PC-3 (cell line): ENCODE measurements at regions of chr4 and their contacts with region 1.

Region 1: DNA sequence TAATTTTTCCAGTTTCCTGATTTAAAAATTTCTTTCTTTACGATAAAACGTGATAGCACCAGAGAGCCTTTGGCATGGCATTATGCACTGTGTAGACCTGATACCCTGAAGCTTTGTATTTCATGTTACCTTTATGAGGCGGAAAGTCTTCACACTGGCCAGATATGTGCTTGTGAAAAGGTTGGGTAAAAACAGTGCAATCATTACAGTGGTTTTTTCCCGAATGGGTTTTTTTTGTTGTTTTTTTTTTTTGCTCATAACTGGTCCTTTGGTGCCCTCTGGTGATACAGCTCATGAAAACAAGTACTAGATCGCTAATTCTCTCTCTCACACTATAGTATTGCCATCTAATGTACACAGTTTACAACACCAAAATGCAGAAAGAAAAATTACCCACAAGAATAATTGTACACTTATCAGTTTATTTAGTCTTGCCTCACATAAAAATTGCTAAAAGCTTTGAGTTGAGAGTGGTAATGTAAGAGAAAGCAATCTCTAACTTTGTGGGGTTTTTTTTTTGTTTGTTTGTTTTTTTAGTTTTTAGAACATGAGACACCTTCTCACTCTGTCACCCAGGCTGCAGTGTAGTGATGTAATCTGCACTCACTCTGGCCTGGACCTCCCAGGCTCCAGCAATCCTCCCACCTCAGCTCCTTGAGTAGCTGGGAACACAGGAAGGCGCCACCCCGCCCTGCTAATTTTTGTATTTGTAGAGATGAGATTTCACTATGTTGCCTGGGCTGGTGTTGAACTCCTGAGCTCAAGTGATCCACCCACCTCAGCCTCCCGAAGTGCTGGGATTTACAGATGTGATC is 21.3 kb downstream of the SPCS3 start:
- DNase-seq: peak; percentile 52
- ATAC-seq: peak; percentile 60
- H3K4me3 ChIP-seq: peak overlapping the region; percentile 49; the same call in 1 of the 2 replicates
- H3K27ac ChIP-seq: no peak overlapping the region
- H3K4me1 ChIP-seq: peaks cover 6% of the 10 kb centered on the region; the same call in 1 of the 2 replicates
- H3K27me3 ChIP-seq: no peaks in the 10 kb centered on the region
- CTCF ChIP-seq: peak; percentile 77

Region 2: DNA sequence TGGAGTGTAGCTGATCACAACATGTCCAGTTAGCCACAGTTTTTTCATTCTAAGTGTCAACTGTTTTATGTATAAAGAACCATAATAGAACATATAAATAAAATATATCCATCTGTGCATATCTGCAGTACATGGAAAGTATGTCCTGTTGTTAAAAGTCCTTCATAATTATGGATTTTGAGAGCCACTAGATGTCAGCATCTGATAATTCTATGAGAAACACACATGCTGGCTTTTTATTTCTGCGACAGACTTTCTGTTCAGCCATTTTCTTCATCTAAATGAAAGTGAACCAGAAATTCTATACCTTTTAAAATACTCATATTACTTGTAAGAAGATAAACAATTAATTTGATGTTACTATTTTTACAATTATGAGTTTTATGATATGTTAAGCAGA is 780.5 kb before region 1 on chr4:
- CTCF ChIA-PET with region 1: no interaction called
- POLR2A ChIA-PET with region 1: no interaction called
- intact Hi-C with region 1: loop called (anchors 1 kb)
- DNase-seq: peak; percentile 68
- ATAC-seq: peak; percentile 68
- H3K4me3 ChIP-seq: no peak overlapping the region
- H3K27ac ChIP-seq: no peak overlapping the region
- H3K4me1 ChIP-seq: 0 out of 2 replicates have a peak, but pooled peaks cover 5% of the 10 kb centered on the region
- H3K27me3 ChIP-seq: no peaks in the 10 kb centered on the region
- CTCF ChIP-seq: peak; percentile 67

Region 3: GRCh38 chr4:175947117-175947722 is 393.9 kb before region 1 on chr4:
- CTCF ChIA-PET with region 1: no interaction called
- POLR2A ChIA-PET with region 1: no interaction called
- intact Hi-C with region 1: loop called (anchors 5 kb)
- DNase-seq: peak; percentile 58
- ATAC-seq: no peak
- H3K4me3 ChIP-seq: no peak overlapping the region
- H3K27ac ChIP-seq: no peak overlapping the region
- H3K4me1 ChIP-seq: no peaks in the 10 kb centered on the region; the same call in 1 of the 2 replicates
- H3K27me3 ChIP-seq: no peaks in the 10 kb centered on the region
- CTCF ChIP-seq: peak; percentile 46

Region 4: DNA sequence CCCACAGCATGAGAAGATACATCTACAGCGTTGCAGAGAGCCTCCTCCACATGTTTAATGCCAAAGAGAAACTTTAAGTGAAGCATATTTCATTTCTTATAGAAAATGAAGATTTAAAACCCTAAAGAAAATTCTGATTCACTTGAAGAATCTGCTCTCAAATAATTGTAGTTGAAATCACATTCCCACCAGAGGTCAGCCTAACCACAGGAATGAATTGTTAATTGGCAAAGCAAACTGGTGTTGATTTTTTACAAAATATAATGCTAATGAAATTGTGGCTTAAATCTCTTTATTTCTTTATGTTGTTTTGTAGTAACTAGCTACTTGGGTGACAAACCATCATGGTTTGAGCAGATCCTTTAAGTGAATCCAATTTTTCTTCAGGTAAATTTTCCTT is 306.6 kb before region 1 on chr4:
- CTCF ChIA-PET with region 1: no interaction called
- POLR2A ChIA-PET with region 1: no interaction called
- intact Hi-C with region 1: loop called (anchors 1 kb)
- DNase-seq: peak; percentile 51
- ATAC-seq: no peak
- H3K4me3 ChIP-seq: no peak overlapping the region
- H3K27ac ChIP-seq: no peak overlapping the region
- H3K4me1 ChIP-seq: no peaks in the 10 kb centered on the region
- H3K27me3 ChIP-seq: no peaks in the 10 kb centered on the region
- CTCF ChIP-seq: peak; percentile 58

Region 5: GRCh38 chr4:176150356-176150682 is 190.8 kb before region 1 on chr4:
- CTCF ChIA-PET with region 1: interaction called, 6 read pairs
- POLR2A ChIA-PET with region 1: no interaction called
- intact Hi-C with region 1: loop called (anchors 1 kb)
- DNase-seq: peak; percentile 47
- ATAC-seq: peak; percentile 60
- H3K4me3 ChIP-seq: no peak overlapping the region
- H3K27ac ChIP-seq: no peak overlapping the region; the same call in 1 of the 2 replicates
- H3K4me1 ChIP-seq: peaks cover 7% of the 10 kb centered on the region; the same call in 1 of the 2 replicates
- H3K27me3 ChIP-seq: no peaks in the 10 kb centered on the region
- CTCF ChIP-seq: peak; percentile 63

Region 6: DNA sequence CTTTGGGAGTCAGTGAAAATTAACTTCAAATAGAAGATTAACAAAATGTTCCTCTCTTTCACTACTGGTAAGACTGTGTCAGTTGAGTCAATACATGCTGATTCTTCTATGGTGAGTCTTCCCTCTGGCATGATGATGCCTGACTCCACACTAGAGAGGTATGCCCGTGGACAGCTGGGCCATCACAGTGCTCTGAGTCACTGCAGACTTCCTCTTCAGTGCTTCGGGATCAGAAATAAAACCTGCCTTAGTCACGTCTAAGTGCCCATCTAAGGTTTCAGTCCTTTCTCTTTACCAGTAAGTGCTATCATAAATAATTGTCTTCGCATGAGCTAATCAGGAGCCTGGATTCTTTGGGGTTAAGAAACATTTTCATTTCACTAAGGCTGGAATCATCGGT is 70.4 kb before region 1 on chr4:
- CTCF ChIA-PET with region 1: no interaction called
- POLR2A ChIA-PET with region 1: no interaction called
- intact Hi-C with region 1: loop called (anchors 5 kb)
- DNase-seq: peak; percentile 94
- ATAC-seq: peak; percentile 98
- H3K4me3 ChIP-seq: peak overlapping the region; percentile 48; the same call in 1 of the 2 replicates
- H3K27ac ChIP-seq: peak overlapping the region; percentile 72
- H3K4me1 ChIP-seq: peaks cover 46% of the 10 kb centered on the region
- H3K27me3 ChIP-seq: no peaks in the 10 kb centered on the region
- CTCF ChIP-seq: no peak

Region 7: DNA sequence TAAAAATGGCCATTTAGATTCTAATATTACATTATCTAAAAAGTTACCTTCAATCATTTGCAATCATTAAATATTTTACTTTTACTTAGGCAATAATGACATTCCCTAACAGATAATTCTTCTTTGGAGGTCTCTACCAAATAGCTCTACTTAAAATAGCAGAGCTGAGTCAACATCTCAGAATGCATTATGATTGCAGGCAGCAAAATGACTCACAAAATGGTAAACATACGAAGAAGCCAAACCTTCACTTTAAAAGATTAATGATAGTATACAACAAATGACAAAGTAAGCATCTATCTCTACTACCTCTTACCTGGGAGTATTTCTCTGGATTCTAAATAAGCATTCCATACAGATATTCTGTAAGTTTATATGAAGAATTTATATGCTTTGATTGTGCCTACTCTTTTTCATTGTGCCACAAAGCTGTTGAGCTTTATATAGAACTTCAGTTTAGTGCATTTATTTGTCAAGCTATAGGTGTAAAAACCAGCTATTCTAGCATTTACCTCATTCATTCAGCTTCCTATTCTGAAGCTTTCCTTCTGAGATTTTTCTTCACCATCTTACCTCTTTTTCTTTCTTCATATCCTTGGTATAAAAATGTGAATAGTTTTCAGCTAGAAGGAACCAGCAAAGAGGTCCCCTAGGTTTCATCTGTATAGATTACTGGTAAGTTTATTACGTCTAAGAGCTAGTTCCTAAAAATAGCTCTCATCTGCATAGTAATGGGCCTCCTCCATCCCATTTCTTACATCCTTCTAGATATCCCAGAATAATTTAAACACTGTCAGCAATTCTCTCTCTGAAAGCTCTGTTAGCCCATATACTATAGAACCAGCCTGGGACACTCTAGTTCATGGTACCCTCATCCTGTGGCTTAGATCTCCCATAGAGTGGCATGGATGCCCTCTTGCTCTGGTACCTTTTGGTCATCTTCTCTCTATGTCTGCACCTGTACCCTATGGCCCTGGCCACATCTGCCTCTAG is 38.5 kb before region 1 on chr4:
- CTCF ChIA-PET with region 1: no interaction called
- POLR2A ChIA-PET with region 1: no interaction called
- intact Hi-C with region 1: loop called (anchors 5 kb)
- DNase-seq: peak; percentile 85
- ATAC-seq: peak; percentile 96
- H3K4me3 ChIP-seq: no peak overlapping the region
- H3K27ac ChIP-seq: peak overlapping the region; percentile 12; the same call in 1 of the 2 replicates
- H3K4me1 ChIP-seq: peaks cover 23% of the 10 kb centered on the region
- H3K27me3 ChIP-seq: no peaks in the 10 kb centered on the region
- CTCF ChIP-seq: no peak